ENCODE measurements at regions of chr3 and their contacts with region 1.

Region 1: GRCh38 chr3:196471551-196471950 is 32.0 kb downstream of the RNF168 start:
- DNase-seq: no peak
- H3K4me3 ChIP-seq: no peak overlapping the region
- H3K27ac ChIP-seq: no peak overlapping the region
- H3K4me1 ChIP-seq: no peaks in the 10 kb centered on the region
- H3K27me3 ChIP-seq: no peaks in the 10 kb centered on the region
- CTCF ChIP-seq: no peak

Region 2: GRCh38 chr3:196159952-196160804 is 311.4 kb before region 1 on chr3:
- CTCF ChIA-PET with region 1: no interaction called
- dilution Hi-C with region 1: loop called (anchors 10 kb)
- in situ Hi-C with region 1: no loop called
- intact Hi-C with region 1: no loop called
- DNase-seq: peak; percentile 48
- H3K4me3 ChIP-seq: no peak overlapping the region
- H3K27ac ChIP-seq: no peak overlapping the region
- H3K4me1 ChIP-seq: no peaks in the 10 kb centered on the region
- H3K27me3 ChIP-seq: no peaks in the 10 kb centered on the region
- CTCF ChIP-seq: no peak

Region 3: DNA sequence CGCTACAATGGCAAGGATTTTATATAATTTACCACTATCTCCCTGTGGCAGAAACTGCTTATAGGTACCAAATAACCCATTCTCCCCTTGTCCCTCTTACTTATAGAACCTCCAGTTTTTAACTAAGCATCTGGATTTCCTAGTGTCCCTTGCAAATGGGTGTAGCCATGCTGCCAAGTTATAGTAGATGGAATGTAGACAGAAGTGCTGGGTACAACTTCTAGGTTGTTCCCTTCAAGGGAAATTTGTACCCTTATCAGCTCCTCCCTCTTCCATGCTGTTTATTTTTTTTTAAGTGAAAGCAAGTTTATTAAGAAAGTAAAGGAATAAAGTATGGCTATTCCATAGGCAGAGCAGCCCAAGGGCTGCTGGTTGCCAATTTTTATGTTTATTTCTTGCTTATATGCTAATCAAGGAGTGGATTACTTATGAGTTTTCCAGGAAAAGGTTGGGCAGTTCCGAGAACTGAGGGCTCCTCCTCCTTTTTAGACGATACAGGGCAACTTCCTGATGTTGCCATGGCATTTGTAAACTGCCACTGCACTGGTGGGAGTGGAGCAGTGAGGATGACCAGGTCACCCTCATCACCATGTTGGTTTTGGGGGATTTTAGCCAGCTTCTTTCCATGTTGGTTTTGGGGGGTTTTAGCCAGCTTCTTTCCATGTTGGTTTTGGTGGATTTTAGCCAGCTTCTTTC is 93.3 kb before region 1 on chr3:
- CTCF ChIA-PET with region 1: no interaction called
- dilution Hi-C with region 1: loop called (anchors 5 kb)
- in situ Hi-C with region 1: no loop called
- intact Hi-C with region 1: no loop called
- DNase-seq: no peak
- H3K4me3 ChIP-seq: no peak overlapping the region
- H3K27ac ChIP-seq: no peak overlapping the region
- H3K4me1 ChIP-seq: no peaks in the 10 kb centered on the region
- H3K27me3 ChIP-seq: no peaks in the 10 kb centered on the region
- CTCF ChIP-seq: no peak

Region 4: DNA sequence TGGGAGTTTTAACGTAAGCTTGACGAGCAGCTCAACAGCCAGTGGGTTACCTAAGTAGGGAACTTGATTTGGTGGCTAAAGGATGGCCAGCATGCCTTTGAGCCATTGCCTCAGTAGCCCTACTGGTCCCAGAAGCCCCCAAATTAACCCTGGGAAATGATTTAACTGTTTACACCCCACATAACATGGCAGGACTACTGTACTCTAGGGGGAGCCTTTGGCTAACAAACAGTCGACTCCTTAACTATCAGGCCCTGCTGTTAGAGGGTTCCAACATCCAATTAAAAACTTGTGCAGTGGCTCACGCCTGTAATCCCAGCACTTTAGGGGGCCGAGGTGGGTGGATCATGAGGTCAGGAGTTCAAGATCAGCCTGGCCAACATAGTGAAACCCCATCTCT is 53.0 kb after region 1 on chr3:
- CTCF ChIA-PET with region 1: no interaction called
- dilution Hi-C with region 1: loop called (anchors 5 kb)
- in situ Hi-C with region 1: no loop called
- intact Hi-C with region 1: no loop called
- DNase-seq: no peak
- H3K4me3 ChIP-seq: no peak overlapping the region
- H3K27ac ChIP-seq: no peak overlapping the region
- H3K4me1 ChIP-seq: peaks cover 4% of the 10 kb centered on the region
- H3K27me3 ChIP-seq: no peaks in the 10 kb centered on the region
- CTCF ChIP-seq: peak in 1 of 2 donors; percentile 4

Region 5: DNA sequence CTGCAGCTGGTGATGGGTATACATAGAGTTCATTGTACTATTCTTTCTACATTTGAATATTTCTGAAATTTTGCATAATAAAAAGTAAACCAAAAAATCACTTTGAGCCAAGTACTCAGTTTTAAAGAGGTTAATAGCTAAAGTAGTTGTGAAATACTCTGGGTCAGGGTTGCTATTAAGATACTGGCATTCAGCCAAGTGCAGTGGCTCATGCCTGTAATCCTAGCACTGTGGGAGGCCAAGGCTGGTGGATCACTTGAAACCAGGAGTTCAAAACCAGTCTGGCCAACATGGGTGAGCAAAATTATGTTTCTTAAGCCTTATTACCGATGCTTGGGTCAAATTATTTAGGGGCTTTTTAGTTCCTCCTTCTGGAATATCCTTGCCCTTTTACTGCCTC is 680.0 kb after region 1 on chr3:
- CTCF ChIA-PET with region 1: no interaction called
- dilution Hi-C with region 1: no loop called
- in situ Hi-C with region 1: no loop called
- intact Hi-C with region 1: no loop called
- DNase-seq: peak; percentile 62
- H3K4me3 ChIP-seq: no peak overlapping the region
- H3K27ac ChIP-seq: no peak overlapping the region
- H3K4me1 ChIP-seq: no peaks in the 10 kb centered on the region
- H3K27me3 ChIP-seq: no peaks in the 10 kb centered on the region
- CTCF ChIP-seq: no peak